ENCODE measurements at regions of chr21 and their contacts with region 1.

Region 1: DNA sequence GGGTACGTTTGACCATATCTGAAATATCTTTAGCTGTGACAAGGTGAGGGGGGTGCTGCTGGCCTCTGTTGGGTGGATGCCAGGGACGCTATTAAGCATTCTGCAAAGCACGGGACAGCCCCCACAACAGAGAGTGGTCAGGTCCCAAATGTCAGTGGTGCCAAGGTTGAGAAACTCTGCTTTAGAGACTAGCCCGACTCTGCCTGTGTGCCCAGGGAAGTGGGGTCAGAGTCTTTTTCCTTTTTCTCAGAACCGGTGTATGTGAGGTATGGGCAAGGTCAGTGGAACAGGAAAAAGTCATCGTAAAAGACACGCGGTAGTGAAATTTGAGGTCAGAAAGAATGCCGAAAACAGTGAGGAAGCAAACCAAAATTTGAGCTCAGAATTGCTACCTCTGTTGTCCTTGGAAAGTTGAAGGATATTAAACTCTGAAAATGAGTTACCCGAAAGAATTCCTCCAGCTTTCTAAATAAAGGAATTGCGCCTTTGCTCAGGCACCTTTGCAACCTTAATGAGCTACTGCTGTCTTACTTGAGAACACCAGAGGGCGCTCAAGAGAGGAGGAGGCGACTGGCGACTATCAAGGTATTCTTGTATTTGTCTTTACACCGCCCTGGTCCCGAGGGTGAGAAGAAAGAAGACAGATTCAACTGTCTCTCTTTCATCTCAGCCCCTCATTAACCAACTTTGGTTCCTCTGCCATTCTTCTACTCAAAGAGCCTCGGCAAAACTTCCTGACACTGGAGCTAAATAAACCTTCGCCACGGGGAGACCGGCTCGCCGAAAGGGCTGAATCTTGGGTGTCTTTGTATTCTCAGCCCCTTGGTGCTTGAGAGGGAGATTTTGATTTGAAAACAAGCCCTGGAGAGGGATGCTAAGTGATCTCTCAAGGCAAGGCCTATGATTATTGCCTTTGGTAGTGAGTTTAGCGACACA is 85.4 kb upstream of the OLIG2 start:
- DNase-seq: peak; percentile 44
- H3K4me3 Mint-ChIP-seq: no peak overlapping the region
- H3K27ac Mint-ChIP-seq: no peak overlapping the region
- H3K4me1 Mint-ChIP-seq: no peaks in the 10 kb centered on the region
- H3K27me3 Mint-ChIP-seq: peaks cover 3% of the 10 kb centered on the region

Region 2: GRCh38 chr21:32884062-32884461 is 56.3 kb before region 1 on chr21:
- CTCF ChIA-PET with region 1: interaction called, 12 read pairs
- POLR2A ChIA-PET with region 1: no interaction called
- intact Hi-C with region 1: no loop called
- DNase-seq: no peak
- H3K4me3 Mint-ChIP-seq: no peak overlapping the region
- H3K27ac Mint-ChIP-seq: no peak overlapping the region
- H3K4me1 Mint-ChIP-seq: peaks cover 17% of the 10 kb centered on the region
- H3K27me3 Mint-ChIP-seq: no peaks in the 10 kb centered on the region

Region 3: GRCh38 chr21:32921632-32922230 is 18.6 kb before region 1 on chr21:
- CTCF ChIA-PET with region 1: interaction called, 33 read pairs
- POLR2A ChIA-PET with region 1: no interaction called
- intact Hi-C with region 1: no loop called
- DNase-seq: peak; percentile 59
- H3K4me3 Mint-ChIP-seq: no peak overlapping the region
- H3K27ac Mint-ChIP-seq: no peak overlapping the region
- H3K4me1 Mint-ChIP-seq: peaks cover 2% of the 10 kb centered on the region
- H3K27me3 Mint-ChIP-seq: peaks cover 2% of the 10 kb centered on the region

Region 4: GRCh38 chr21:32955311-32956060 is 15.1 kb after region 1 on chr21:
- CTCF ChIA-PET with region 1: interaction called, 10 read pairs
- POLR2A ChIA-PET with region 1: no interaction called
- intact Hi-C with region 1: no loop called
- DNase-seq: no peak
- H3K4me3 Mint-ChIP-seq: no peak overlapping the region
- H3K27ac Mint-ChIP-seq: no peak overlapping the region
- H3K4me1 Mint-ChIP-seq: no peaks in the 10 kb centered on the region
- H3K27me3 Mint-ChIP-seq: peaks cover 49% of the 10 kb centered on the region

Region 5: DNA sequence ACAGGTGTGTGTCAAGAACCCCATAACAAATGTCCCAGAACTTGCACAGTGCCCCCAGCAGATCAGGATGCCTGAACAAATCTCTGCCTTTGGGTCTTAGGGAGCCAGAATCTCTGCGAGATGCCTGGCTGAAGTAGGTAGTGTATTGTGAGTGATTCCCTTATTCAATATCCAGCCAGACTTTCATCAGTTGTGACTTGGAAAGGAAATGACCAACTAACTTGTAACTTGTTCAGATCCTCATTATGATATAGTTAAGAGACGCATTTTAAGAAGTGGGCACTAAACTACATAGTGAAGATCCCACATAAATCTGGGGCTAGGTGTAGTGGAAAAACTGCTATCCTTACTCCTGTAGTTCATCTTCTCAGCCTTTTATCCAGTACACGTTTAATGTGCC is 97.2 kb after region 1 on chr21:
- CTCF ChIA-PET with region 1: no interaction called
- POLR2A ChIA-PET with region 1: no interaction called
- intact Hi-C with region 1: no loop called
- DNase-seq: no peak
- H3K4me3 Mint-ChIP-seq: no peak overlapping the region
- H3K27ac Mint-ChIP-seq: no peak overlapping the region
- H3K4me1 Mint-ChIP-seq: peaks cover 9% of the 10 kb centered on the region
- H3K27me3 Mint-ChIP-seq: peaks cover 15% of the 10 kb centered on the region

Region 6: DNA sequence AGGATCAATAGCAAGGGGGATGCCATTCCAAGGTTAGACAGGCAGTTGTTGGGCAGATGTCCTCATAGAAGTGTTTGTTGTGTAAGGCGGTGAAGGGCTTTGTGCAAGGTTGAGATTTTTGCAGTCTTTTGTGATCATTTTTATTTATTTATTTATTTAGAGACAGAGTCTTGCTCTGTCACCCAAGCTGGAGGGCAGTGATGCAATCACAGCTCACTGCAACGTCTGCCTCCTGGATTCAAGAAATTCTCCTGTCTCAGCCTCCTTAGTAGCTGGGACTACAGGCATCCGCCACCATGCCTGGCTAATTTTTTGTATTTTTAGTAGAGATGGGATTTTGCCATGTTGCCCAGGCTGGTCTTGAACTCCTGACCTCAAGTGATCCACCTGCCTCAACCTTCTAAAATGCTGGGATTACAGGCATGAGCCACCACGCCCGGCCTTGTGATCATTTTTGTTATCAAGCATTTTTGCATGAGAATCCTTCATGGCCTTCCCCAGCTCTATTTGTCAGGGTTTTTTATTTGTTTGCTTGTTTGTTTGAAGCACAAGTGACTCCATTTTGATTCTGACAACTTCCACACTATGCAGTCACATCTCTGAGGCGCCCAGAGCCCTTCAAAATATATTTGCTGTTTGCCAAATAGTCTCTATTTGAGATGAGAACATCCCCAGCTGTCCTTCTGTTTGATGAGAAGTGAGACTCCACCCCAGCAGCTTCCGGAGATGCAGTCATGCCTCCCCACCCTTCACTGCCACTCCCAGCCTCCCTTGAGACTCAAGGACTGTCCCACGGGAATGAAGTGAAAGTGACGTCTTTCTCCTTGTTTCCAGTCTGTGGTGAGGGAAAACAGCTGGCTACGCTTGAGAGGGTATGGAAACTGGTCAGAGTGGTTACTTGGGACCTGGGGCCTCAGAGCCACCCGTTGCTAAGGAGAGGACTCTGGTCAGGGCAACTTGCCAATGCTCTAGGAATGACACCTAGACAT is 501.4 kb after region 1 on chr21:
- CTCF ChIA-PET with region 1: interaction called, 17 read pairs
- POLR2A ChIA-PET with region 1: no interaction called
- intact Hi-C with region 1: no loop called
- DNase-seq: no peak
- H3K4me3 Mint-ChIP-seq: no peak overlapping the region
- H3K27ac Mint-ChIP-seq: no peak overlapping the region
- H3K4me1 Mint-ChIP-seq: peaks cover 3% of the 10 kb centered on the region
- H3K27me3 Mint-ChIP-seq: no peaks in the 10 kb centered on the region